Activated B cell treated with CpG ODN at 0.5 μM for 24 hours (primary cell): ENCODE measurements at regions of chr19 and their contacts with region 1.

Region 1: GRCh38 chr19:1592755-1593500 is at the start of gene MBD3:
- DNase-seq: peak; percentile 89
- ATAC-seq: peak; percentile 84
- H3K4me3 Mint-ChIP-seq: peak within 1 kb of the TSS; percentile 90
- H3K27ac Mint-ChIP-seq: peak within 1 kb of the TSS; percentile 89
- H3K4me1 Mint-ChIP-seq: peaks cover 33% of the 10 kb centered on the region
- H3K27me3 Mint-ChIP-seq: no peaks in the 10 kb centered on the region
- CTCF ChIP-seq: no peak
- total RNA-seq, gene MBD3: 91.9 and 96.9 TPM in 2 replicates

Region 2: DNA sequence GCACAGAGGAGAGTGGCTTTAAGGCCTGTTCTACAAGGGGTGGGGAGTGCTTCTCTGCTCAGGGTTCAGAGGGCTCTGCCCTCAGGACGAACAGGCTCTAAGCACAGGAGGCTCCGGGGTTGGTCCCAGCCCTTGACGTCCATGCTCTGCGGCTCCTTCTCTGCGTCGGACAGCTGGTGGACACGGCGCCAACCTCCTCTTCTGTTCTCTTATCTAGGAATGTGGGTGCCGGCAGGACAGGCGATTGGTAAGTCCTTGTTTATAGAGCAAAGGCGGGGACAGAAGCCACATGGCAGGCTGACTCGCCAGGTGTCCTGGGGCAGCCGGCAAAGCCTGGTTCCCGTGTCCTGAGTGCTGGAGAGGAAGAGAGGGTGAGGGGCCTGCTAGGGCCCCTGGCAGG is 163.2 kb before region 1 on chr19:
- CTCF ChIA-PET with region 1: no interaction called
- POLR2A ChIA-PET with region 1: no interaction called
- intact Hi-C with region 1: no loop called
- DNase-seq: no peak
- ATAC-seq: no peak
- H3K4me3 Mint-ChIP-seq: no peak overlapping the region
- H3K27ac Mint-ChIP-seq: no peak overlapping the region
- H3K4me1 Mint-ChIP-seq: peaks cover 3% of the 10 kb centered on the region
- H3K27me3 Mint-ChIP-seq: no peaks in the 10 kb centered on the region
- CTCF ChIP-seq: no peak

Region 3: DNA sequence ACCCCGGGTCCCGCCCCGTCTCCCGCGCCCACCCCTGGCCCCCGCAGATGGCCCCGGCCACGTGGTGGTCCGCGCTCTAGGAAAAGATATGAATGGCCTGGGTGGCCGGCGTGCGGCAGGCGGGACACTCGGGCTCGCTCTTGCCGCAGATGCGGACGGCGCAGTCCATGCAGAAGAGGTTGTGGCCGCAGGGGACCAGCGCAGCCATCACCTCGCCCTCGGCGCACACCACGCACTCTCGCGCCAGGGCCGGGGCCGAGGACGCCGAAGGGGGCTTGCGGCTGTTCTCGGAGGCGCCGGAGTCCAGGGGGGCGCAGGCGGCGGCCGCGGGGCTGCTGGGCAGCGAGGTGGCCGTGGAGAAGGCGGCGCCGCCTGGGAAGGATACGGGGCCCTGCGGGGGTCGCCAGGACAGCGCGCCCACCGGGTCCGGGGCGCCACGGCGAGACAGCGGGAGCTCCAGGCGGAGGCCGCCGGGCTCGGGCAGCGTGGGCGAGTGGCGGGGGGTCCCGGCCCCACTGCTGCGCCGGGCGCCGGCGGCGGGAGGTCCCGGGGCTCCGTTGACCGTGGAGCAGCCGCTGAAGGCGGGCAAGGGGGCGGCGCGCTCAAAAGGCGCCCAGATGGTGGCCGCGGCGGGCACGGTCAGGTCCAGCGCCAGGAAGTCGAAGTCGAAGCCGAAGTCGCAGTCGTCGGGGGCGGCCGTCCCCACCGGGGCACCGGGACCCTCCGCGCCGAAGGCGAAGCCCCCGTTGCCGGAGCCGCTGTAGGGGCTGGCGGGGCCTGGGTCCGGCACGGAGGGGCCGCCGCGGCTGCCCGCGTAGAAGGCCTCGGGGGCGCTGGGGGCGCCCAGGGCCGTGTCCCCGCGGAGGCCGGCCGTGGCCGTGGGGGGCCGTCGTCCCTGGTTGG is 37.2 kb before region 1 on chr19:
- CTCF ChIA-PET with region 1: no interaction called
- POLR2A ChIA-PET with region 1: interaction called, 12 read pairs
- intact Hi-C with region 1: no loop called
- DNase-seq: no peak
- ATAC-seq: no peak
- H3K4me3 Mint-ChIP-seq: no peak overlapping the region
- H3K27ac Mint-ChIP-seq: no peak overlapping the region
- H3K4me1 Mint-ChIP-seq: no peaks in the 10 kb centered on the region
- H3K27me3 Mint-ChIP-seq: peaks cover 8% of the 10 kb centered on the region
- CTCF ChIP-seq: no peak

Region 4: GRCh38 chr19:1568320-1569019 is 24.5 kb before region 1 on chr19 and contains the start of gene MEX3D:
- CTCF ChIA-PET with region 1: no interaction called
- POLR2A ChIA-PET with region 1: interaction called, 8 read pairs
- intact Hi-C with region 1: loop called (anchors 1 kb)
- DNase-seq: peak; percentile 77
- ATAC-seq: peak; percentile 93
- H3K4me3 Mint-ChIP-seq: peak within 1 kb of the TSS; percentile 57
- H3K27ac Mint-ChIP-seq: no peak within 1 kb of the TSS
- H3K4me1 Mint-ChIP-seq: peaks cover 5% of the 10 kb centered on the region
- H3K27me3 Mint-ChIP-seq: no peaks in the 10 kb centered on the region
- CTCF ChIP-seq: no peak
- total RNA-seq, gene MEX3D: 2.1 and 2.5 TPM in 2 replicates

Region 5: DNA sequence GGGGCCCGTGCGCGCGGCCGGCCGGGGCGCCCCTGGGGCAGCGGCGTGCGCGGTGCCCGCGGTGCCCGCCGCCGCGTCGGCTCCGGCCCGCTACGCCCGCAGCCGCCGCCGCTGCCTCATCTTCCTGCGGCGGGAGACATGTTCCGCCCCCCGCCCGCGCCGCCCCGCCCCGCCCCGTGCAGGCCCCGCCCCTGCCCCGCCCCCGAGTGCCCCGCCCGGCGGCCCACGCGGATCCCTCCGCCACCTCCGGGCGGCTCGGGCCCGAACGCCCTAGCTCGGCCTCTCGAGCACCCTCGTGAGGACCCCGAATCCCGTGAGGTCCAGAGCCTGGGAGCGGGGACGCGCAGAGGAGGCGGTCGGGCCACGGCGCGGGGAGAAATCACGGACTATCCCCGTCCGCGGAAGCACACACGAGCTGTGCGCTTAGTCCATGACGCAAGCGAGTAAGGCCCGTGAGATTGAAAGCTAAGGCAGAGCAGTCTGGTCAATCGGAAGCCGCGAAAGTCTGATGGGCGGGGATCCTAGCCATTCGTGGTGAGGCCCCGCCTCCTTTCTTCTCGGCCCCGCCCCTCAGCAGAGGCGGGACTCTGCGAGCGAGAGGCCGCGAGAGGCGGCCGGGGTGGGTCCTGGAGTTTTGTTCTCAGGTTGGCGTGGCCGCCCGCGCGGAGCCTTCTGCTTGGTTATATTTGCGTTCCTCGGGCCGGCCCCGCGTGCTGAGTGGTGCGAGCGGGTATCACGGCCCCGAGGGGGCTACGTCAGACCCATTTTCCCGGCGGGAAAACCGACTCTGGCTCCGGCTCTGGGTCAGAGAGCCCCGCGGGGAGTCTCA is 59.8 kb after region 1 on chr19 and contains the start of gene TCF3:
- CTCF ChIA-PET with region 1: no interaction called
- POLR2A ChIA-PET with region 1: interaction called, 16 read pairs
- intact Hi-C with region 1: no loop called
- DNase-seq: peak; percentile 99
- ATAC-seq: peak; percentile 82
- H3K4me3 Mint-ChIP-seq: peak within 1 kb of the TSS; percentile 91
- H3K27ac Mint-ChIP-seq: peak within 1 kb of the TSS; percentile 95
- H3K4me1 Mint-ChIP-seq: peaks cover 68% of the 10 kb centered on the region
- H3K27me3 Mint-ChIP-seq: no peaks in the 10 kb centered on the region
- CTCF ChIP-seq: no peak
- total RNA-seq, gene TCF3: 139 and 143 TPM in 2 replicates

Region 6: GRCh38 chr19:1665565-1666047 is 72.7 kb after region 1 on chr19:
- CTCF ChIA-PET with region 1: no interaction called
- POLR2A ChIA-PET with region 1: interaction called, 10 read pairs
- intact Hi-C with region 1: loop called (anchors 2 kb)
- DNase-seq: peak; percentile 35
- ATAC-seq: peak; percentile 9
- H3K4me3 Mint-ChIP-seq: peak overlapping the region; percentile 55
- H3K27ac Mint-ChIP-seq: peak overlapping the region; percentile 79
- H3K4me1 Mint-ChIP-seq: peaks cover 73% of the 10 kb centered on the region
- H3K27me3 Mint-ChIP-seq: no peaks in the 10 kb centered on the region
- CTCF ChIP-seq: no peak

Region 7: GRCh38 chr19:1812469-1813196 is 219.7 kb after region 1 on chr19:
- CTCF ChIA-PET with region 1: no interaction called
- POLR2A ChIA-PET with region 1: no interaction called
- intact Hi-C with region 1: loop called (anchors 2 kb)
- DNase-seq: peak; percentile 82
- ATAC-seq: peak; percentile 81
- H3K4me3 Mint-ChIP-seq: peak overlapping the region; percentile 96
- H3K27ac Mint-ChIP-seq: peak overlapping the region; percentile 90
- H3K4me1 Mint-ChIP-seq: peaks cover 14% of the 10 kb centered on the region
- H3K27me3 Mint-ChIP-seq: no peaks in the 10 kb centered on the region
- CTCF ChIP-seq: no peak

Region 8: DNA sequence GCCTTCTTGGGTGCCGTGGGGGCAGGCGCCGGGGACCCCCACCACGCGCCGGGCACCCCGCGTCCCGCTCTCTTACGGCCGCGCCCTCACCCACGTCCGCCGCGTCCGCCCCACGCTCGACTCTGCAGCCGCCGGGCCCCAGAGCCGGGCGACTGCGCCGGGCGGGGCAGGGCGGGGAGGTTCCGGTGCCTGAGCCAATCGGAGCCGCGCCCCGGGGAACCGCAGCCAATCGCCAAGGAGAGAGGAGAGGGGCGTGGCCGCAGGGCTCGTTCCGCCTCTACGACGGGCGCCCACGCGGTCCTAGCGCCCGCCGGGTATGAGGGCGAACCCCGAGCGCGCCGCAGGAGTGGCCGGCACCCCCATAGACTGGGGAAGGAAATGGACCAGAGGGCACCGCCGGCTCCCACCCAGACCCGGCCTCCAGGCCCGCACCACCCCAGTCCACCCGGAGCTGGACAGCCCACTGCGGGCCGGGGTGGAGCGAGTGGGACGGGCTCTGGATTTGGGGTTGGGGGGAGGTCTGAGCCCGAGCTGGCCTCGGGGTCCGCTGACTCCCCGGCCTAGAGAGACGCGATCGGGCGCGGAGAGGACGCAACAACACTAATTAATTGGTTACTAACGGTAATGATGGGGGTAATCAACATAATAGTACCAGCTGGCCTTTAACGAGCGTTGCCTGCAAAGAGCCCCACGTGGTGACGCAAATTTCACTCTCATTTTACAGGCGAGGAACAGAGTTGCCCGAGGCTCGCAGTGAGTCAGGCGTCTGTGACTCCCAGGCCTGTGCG is 1964.7 kb after region 1 on chr19 and contains the start of gene MFSD12:
- CTCF ChIA-PET with region 1: no interaction called
- POLR2A ChIA-PET with region 1: interaction called, 11 read pairs
- intact Hi-C with region 1: no loop called
- DNase-seq: peak; percentile 94
- ATAC-seq: peak; percentile 86
- H3K4me3 Mint-ChIP-seq: peak within 1 kb of the TSS; percentile 89
- H3K27ac Mint-ChIP-seq: peak within 1 kb of the TSS; percentile 86
- H3K4me1 Mint-ChIP-seq: peaks cover 57% of the 10 kb centered on the region
- H3K27me3 Mint-ChIP-seq: no peaks in the 10 kb centered on the region
- CTCF ChIP-seq: no peak
- total RNA-seq, gene MFSD12: 59.2 and 76.9 TPM in 2 replicates